Activated CD4-positive, alpha-beta memory T cell treated with anti-CD3 and anti-CD28 coated beads for 36 hours (primary cell): ENCODE measurements at regions of chr15 and their contacts with region 1.

Region 1: GRCh38 chr15:50354838-50355618 is at the start of gene GABPB1:
- DNase-seq: peak; percentile 92
- H3K4me3 Mint-ChIP-seq: peak within 1 kb of the TSS; percentile 90
- H3K27ac Mint-ChIP-seq: peak within 1 kb of the TSS; percentile 98
- H3K4me1 Mint-ChIP-seq: peaks cover 44% of the 10 kb centered on the region
- H3K27me3 Mint-ChIP-seq: peaks cover 2% of the 10 kb centered on the region
- total RNA-seq, gene GABPB1: 54.1 to 58.2 TPM

Region 2: GRCh38 chr15:49155110-49155833 is 1199.8 kb before region 1 on chr15 and contains the start of gene COPS2:
- CTCF ChIA-PET with region 1: no interaction called
- POLR2A ChIA-PET with region 1: no interaction called
- intact Hi-C with region 1: loop called (anchors 1 kb)
- DNase-seq: peak; percentile 97
- H3K4me3 Mint-ChIP-seq: peak within 1 kb of the TSS; percentile 99
- H3K27ac Mint-ChIP-seq: peak within 1 kb of the TSS; percentile 97
- H3K4me1 Mint-ChIP-seq: peaks cover 50% of the 10 kb centered on the region
- H3K27me3 Mint-ChIP-seq: no peaks in the 10 kb centered on the region
- total RNA-seq, gene COPS2: 79.8 to 80.0 TPM

Region 3: GRCh38 chr15:50247819-50248655 is 107.0 kb before region 1 on chr15:
- CTCF ChIA-PET with region 1: no interaction called
- POLR2A ChIA-PET with region 1: interaction called, 6 read pairs
- intact Hi-C with region 1: loop called (anchors 2 kb)
- DNase-seq: peak; percentile 82
- H3K4me3 Mint-ChIP-seq: peak overlapping the region; percentile 75
- H3K27ac Mint-ChIP-seq: peak overlapping the region; percentile 97
- H3K4me1 Mint-ChIP-seq: peaks cover 35% of the 10 kb centered on the region
- H3K27me3 Mint-ChIP-seq: no peaks in the 10 kb centered on the region

Region 4: GRCh38 chr15:50377867-50378751 is 23.1 kb after region 1 on chr15:
- CTCF ChIA-PET with region 1: interaction called, 3 read pairs
- POLR2A ChIA-PET with region 1: interaction called, 17 read pairs
- intact Hi-C with region 1: loop called (anchors 1 kb)
- DNase-seq: no peak
- H3K4me3 Mint-ChIP-seq: no peak overlapping the region
- H3K27ac Mint-ChIP-seq: peak overlapping the region; percentile 76
- H3K4me1 Mint-ChIP-seq: peaks cover 17% of the 10 kb centered on the region
- H3K27me3 Mint-ChIP-seq: peaks cover 3% of the 10 kb centered on the region

Region 5: GRCh38 chr15:50484781-50485180 is 129.8 kb after region 1 on chr15:
- CTCF ChIA-PET with region 1: no interaction called
- POLR2A ChIA-PET with region 1: no interaction called
- intact Hi-C with region 1: loop called (anchors 1 kb)
- DNase-seq: no peak
- H3K4me3 Mint-ChIP-seq: no peak overlapping the region
- H3K27ac Mint-ChIP-seq: no peak overlapping the region
- H3K4me1 Mint-ChIP-seq: peaks cover 29% of the 10 kb centered on the region
- H3K27me3 Mint-ChIP-seq: no peaks in the 10 kb centered on the region

Region 6: GRCh38 chr15:50765195-50765973 is 410.4 kb after region 1 on chr15 and contains the start of gene SPPL2A:
- CTCF ChIA-PET with region 1: no interaction called
- POLR2A ChIA-PET with region 1: interaction called, 8 read pairs
- intact Hi-C with region 1: loop called (anchors 1 kb)
- DNase-seq: peak; percentile 94
- H3K4me3 Mint-ChIP-seq: peak within 1 kb of the TSS; percentile 92
- H3K27ac Mint-ChIP-seq: peak within 1 kb of the TSS; percentile 93
- H3K4me1 Mint-ChIP-seq: peaks cover 56% of the 10 kb centered on the region
- H3K27me3 Mint-ChIP-seq: no peaks in the 10 kb centered on the region
- total RNA-seq, gene SPPL2A: 79.9 to 82.1 TPM

Region 7: GRCh38 chr15:50908210-50909009 is 553.4 kb after region 1 on chr15 and contains the start of gene AP4E1:
- CTCF ChIA-PET with region 1: interaction called, 4 read pairs
- POLR2A ChIA-PET with region 1: interaction called, 3 read pairs
- intact Hi-C with region 1: loop called (anchors 1 kb)
- DNase-seq: peak; percentile 96
- H3K4me3 Mint-ChIP-seq: peak within 1 kb of the TSS; percentile 93
- H3K27ac Mint-ChIP-seq: peak within 1 kb of the TSS; percentile 98
- H3K4me1 Mint-ChIP-seq: peaks cover 22% of the 10 kb centered on the region
- H3K27me3 Mint-ChIP-seq: no peaks in the 10 kb centered on the region
- total RNA-seq, gene AP4E1: 12.0 to 12.7 TPM

Region 8: GRCh38 chr15:51270706-51271105 is 915.7 kb after region 1 on chr15:
- CTCF ChIA-PET with region 1: no interaction called
- POLR2A ChIA-PET with region 1: no interaction called
- intact Hi-C with region 1: no loop called
- DNase-seq: no peak
- H3K4me3 Mint-ChIP-seq: no peak overlapping the region
- H3K27ac Mint-ChIP-seq: no peak overlapping the region
- H3K4me1 Mint-ChIP-seq: peaks cover 8% of the 10 kb centered on the region
- H3K27me3 Mint-ChIP-seq: peaks cover 21% of the 10 kb centered on the region